Panc1 (cell line): ENCODE measurements at regions of chr22 and their contacts with region 1.

Region 1: GRCh38 chr22:32518848-32519247 is 44.2 kb downstream of the FBXO7 start:
- DNase-seq: no peak
- ATAC-seq: no peak
- H3K4me3 ChIP-seq: no peak overlapping the region
- H3K27ac ChIP-seq: no peak overlapping the region
- H3K4me1 ChIP-seq: no peaks in the 10 kb centered on the region
- H3K27me3 ChIP-seq: no peaks in the 10 kb centered on the region; the same call in none of the 2 replicates
- CTCF ChIP-seq: peak; percentile 42

Region 2: DNA sequence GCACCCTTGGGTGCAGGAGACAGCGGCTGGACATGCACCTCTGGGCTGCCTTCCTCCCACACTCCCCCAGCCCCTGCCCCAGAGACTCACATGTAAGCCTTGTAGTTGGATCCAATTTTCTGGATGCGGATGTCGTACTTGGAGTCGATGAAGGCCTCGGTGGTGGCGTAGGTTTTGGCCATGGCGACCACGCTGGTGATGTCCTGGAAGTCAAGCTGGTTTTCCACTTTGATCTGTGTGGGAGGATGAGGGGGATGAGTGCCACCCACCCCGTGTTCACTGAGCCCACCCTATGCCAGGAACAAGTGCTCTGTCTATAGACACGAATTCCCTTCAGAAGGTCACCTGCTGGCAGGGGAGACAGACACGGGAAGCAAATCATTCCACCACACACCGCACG is 22.6 kb after region 1 on chr22:
- CTCF ChIA-PET with region 1: no interaction called
- POLR2A ChIA-PET with region 1: interaction called, 15 read pairs
- in situ Hi-C with region 1: no loop called
- intact Hi-C with region 1: no loop called
- DNase-seq: no peak
- ATAC-seq: no peak
- H3K4me3 ChIP-seq: no peak overlapping the region
- H3K27ac ChIP-seq: no peak overlapping the region
- H3K4me1 ChIP-seq: no peaks in the 10 kb centered on the region
- H3K27me3 ChIP-seq: no peaks in the 10 kb centered on the region; the same call in 1 of the 2 replicates
- CTCF ChIP-seq: no peak